OCI-LY7 (cell line): ENCODE measurements at regions of chr2 and their contacts with region 1.

Region 1: DNA sequence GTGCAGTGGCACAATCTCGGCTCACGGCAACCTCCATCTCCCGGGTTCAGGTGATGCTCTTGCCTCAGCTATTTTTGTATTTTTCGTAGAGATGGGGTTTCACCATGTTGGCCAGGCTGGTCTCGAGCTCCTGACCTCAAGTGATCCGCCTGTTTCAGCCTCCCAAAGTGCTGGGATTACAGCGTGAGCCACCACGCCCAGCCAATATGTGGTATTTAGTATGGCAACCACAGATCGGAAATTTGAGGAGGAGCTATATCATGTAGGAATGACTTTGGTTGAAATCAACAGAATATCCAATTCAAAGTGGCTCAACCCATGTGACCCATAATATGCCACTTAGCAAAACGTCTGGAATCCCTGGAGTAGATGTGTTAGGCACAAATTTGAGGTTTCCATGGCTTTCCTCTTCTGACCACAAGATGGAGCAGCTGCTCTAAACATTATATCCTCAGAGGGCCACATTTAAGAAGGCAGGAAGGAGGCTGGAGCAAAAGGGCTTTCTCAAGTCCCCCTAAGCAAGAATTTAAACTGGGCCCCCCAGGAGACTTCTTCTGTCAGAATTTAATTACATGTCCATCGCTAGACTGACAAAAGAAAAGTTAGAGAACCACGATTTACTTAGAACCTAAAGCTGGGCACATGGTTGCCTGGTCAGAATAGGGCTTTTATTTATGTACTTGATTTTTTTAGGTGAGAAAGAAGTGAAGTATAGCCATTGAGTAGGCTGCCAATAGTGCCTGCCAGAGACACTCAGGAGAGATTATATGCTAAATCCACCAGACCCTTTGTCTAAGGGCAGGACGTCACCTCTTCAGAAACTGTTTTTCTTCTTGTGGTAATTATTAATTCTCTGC is 49.6 kb upstream of the ITSN2 start:
- DNase-seq: peak; percentile 76
- H3K4me3 ChIP-seq: no peak overlapping the region
- H3K27ac ChIP-seq: no peak overlapping the region
- H3K4me1 ChIP-seq: no peaks in the 10 kb centered on the region
- CTCF ChIP-seq: peak; percentile 96

Region 2: GRCh38 chr2:24385366-24385765 is 24.6 kb before region 1 on chr2:
- CTCF ChIA-PET with region 1: no interaction called
- POLR2A ChIA-PET with region 1: no interaction called
- intact Hi-C with region 1: no loop called
- DNase-seq: no peak
- H3K4me3 ChIP-seq: no peak overlapping the region
- H3K27ac ChIP-seq: no peak overlapping the region
- H3K4me1 ChIP-seq: peaks cover 5% of the 10 kb centered on the region
- CTCF ChIP-seq: no peak

Region 3: DNA sequence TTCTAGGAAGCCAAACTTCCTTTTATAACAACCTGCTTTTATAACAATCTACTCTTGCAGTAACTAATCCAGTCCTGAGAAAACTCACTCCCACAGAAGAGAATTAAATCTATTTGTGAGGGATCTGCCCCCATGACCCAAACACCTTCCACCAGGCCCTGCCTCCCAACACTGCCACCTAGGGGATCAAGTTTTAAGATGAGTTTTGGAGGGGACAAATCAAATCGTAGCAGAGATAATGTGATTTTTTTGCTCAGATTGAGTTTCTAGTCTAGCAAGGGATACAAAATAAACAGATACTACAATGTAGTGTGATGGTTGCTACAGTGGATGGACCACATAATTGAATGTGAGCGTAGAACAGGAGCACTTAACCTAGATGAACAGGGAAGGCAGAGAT is 133.3 kb after region 1 on chr2:
- CTCF ChIA-PET with region 1: no interaction called
- POLR2A ChIA-PET with region 1: no interaction called
- intact Hi-C with region 1: loop called (anchors 10 kb)
- DNase-seq: peak; percentile 22
- H3K4me3 ChIP-seq: no peak overlapping the region
- H3K27ac ChIP-seq: no peak overlapping the region
- H3K4me1 ChIP-seq: peaks cover 7% of the 10 kb centered on the region
- CTCF ChIP-seq: peak; percentile 82

Region 4: DNA sequence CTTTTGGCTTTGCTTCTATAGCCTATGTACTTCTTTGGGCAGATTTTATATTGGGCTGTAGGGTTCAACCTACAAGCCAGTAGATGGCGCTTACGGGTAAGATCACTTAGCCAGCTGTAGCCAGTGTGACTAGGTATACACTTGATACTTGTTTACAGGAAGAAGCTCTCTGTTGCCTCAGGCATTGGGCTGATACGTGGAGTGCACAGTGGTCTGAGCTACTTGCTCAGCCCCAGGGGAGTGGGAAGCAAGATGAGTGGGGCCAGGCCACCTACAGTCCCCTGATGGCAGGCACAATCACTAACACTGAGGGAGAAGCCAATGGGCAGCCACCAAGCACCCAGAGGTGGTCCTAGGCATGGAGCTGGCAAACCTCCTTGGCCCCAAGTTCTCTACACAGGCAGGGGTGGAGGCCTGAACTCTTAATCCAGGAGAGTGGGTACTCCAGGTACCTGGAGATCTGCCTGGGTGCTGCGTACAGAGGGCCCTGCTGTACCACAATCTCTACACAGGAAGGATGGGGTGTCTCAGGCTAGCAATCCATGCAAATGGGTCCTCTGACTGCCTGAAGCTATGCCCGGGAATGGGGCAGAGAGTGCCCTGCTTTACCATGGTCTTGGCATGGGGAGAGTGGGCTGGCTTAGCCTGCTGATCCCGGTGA is 203.4 kb after region 1 on chr2:
- CTCF ChIA-PET with region 1: no interaction called
- POLR2A ChIA-PET with region 1: no interaction called
- intact Hi-C with region 1: loop called (anchors 5 kb)
- DNase-seq: peak; percentile 72
- H3K4me3 ChIP-seq: no peak overlapping the region
- H3K27ac ChIP-seq: no peak overlapping the region
- H3K4me1 ChIP-seq: no peaks in the 10 kb centered on the region
- CTCF ChIP-seq: peak; percentile 80

Region 5: DNA sequence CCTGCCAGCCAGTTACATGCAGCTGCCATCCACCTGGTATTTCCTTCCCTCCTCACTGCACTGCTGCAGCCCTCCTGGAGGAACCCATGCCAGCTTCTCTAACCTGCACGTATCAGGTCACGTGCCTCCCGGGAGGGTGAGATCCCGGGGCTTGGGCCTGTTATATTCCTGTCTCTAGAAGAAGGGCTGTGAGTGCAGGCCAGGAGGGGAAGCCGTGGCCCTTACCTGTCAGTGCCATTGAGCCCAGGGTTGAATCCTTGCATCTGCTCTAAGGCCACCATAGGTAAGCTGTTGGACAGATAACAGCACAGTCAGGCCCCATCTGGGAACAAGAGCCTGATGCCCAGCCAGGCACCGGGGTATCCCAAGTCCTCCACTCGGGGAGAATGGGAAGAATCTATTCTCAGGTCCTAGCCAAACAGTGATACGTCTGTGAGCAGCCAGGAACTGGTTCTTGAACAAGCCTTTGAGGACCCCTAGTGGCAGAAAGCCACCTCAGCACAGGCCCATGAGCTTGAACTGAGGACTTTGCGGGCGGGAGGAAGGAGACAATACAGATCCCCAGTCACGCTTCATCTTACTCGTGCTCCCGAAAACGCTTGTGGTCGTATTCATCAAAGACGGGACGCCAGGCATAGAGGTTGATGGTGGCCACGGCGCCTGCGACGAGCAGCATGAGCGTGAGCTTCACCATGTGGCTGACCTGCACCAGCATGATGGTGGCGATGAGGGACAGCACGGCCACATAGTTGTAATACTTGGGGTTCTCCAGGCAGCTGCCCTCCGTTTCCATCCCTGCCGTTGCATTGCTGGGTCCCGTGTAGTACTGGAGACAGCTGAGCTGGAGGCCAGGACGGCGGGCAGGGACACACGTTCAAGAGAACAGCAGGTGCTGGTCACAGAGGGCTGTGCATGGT is 417.7 kb after region 1 on chr2:
- CTCF ChIA-PET with region 1: interaction called, 5 read pairs
- POLR2A ChIA-PET with region 1: no interaction called
- intact Hi-C with region 1: loop called (anchors 1 kb)
- DNase-seq: peak; percentile 87
- H3K4me3 ChIP-seq: no peak overlapping the region
- H3K27ac ChIP-seq: peak overlapping the region; percentile 14
- H3K4me1 ChIP-seq: peaks cover 20% of the 10 kb centered on the region
- CTCF ChIP-seq: peak; percentile 91

Region 6: GRCh38 chr2:25127646-25128045 is 717.7 kb after region 1 on chr2:
- CTCF ChIA-PET with region 1: no interaction called
- POLR2A ChIA-PET with region 1: no interaction called
- intact Hi-C with region 1: loop called (anchors 1 kb)
- DNase-seq: no peak
- H3K4me3 ChIP-seq: no peak overlapping the region
- H3K27ac ChIP-seq: no peak overlapping the region
- H3K4me1 ChIP-seq: peaks cover 3% of the 10 kb centered on the region
- CTCF ChIP-seq: no peak